Activated CD4-positive, alpha-beta memory T cell treated with anti-CD3 and anti-CD28 coated beads, Interleukin-2, amount 10 ng/mL, durations not matched to agents 7 days and 5 days (primary cell): ENCODE measurements at regions of chr7 and their contacts with region 1.

Region 1: DNA sequence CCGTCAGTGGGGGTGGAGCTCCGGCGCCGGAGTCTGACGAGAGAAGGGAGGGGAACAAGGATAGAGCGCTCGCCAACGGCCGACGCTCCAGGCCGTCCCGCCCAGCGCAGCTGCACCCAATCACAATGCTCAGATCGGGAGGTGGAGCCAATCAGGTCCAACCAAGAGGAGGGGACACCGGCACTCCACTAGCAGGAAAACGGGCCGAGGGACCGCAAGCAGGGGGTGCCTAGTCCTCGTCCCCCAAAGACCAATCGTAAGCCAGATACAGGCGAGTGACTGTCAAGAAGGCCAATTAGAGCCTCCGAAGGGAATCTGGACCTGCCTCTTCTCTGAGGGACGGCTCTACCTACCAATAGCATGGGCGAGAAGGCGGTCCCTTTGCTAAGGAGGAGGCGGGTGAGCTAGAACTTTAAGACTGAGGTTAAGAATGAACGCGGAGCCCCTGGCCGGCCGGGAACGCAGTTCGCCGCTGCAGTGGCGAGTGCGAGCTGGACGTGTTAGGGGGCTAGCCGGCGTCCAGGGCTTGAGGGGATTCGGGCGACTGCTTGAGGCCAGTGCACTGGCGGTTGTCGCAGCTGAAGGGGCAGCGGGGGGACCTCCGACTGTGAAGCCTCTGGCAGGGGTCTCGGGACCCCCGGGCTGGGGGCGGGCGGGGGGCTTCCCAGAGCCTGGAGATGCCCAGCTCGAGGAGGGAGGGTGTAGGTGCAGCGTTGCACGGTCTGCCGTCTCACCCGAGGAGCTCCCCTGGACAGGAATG is at the start of gene FBXO24:
- DNase-seq: peak; percentile 100
- H3K4me3 Mint-ChIP-seq: peak within 1 kb of the TSS; percentile 95
- H3K27ac Mint-ChIP-seq: peak within 1 kb of the TSS; percentile 97
- H3K4me1 Mint-ChIP-seq: peaks cover 30% of the 10 kb centered on the region
- H3K27me3 Mint-ChIP-seq: peaks cover 9% of the 10 kb centered on the region
- total RNA-seq, gene FBXO24: 1.8 to 2.7 TPM

Region 2: GRCh38 chr7:100049441-100050311 is 536.8 kb before region 1 on chr7 and contains the start of gene ZSCAN21:
- CTCF ChIA-PET with region 1: no interaction called
- POLR2A ChIA-PET with region 1: no interaction called
- DNase-seq: peak; percentile 81
- H3K4me3 Mint-ChIP-seq: peak within 1 kb of the TSS; percentile 85
- H3K27ac Mint-ChIP-seq: peak within 1 kb of the TSS; percentile 80
- H3K4me1 Mint-ChIP-seq: peaks cover 17% of the 10 kb centered on the region
- H3K27me3 Mint-ChIP-seq: peaks cover 3% of the 10 kb centered on the region
- total RNA-seq, gene ZSCAN21: 6.9 TPM

Region 3: DNA sequence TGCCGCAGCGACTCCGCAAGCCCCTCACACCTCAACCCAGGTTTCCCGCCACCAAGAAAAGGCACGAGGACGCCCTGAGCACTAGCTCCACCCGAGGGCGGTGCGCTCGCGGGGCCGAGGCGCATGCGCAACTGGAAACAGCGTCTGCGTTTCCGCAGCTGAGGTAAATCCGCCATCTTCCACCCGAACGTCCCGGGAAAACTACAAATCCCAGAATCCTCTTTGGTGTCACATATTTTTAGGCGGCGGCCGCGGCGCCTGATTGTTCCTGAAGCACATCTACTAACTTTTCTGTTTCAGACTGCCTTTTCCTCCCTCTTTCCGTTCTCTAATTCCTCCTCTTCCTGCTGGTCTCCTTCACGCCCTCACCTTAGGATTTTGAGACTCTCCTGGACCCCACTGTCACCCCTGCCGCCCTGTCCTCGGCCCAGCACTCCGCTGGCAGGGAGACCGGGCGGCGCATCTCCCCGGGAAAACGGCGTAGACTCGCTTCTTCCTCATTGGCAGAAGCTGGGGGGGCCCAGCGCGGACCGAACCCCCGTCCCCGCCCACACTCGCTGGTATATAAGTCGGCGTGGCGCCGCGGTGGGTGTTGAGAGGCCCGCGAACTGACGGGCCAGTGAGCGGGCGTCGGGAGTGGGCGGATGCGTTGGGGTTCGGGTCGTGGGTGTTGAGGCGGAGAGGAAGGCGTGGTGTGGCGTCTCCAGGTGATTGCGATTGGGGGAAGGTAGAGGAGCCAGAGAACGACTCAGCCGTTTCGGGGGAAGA is 158.1 kb before region 1 on chr7 and contains the start of gene ZCWPW1:
- CTCF ChIA-PET with region 1: no interaction called
- POLR2A ChIA-PET with region 1: interaction called, 32 read pairs
- DNase-seq: peak; percentile 96
- H3K4me3 Mint-ChIP-seq: peak within 1 kb of the TSS; percentile 92
- H3K27ac Mint-ChIP-seq: peak within 1 kb of the TSS; percentile 100
- H3K4me1 Mint-ChIP-seq: peaks cover 46% of the 10 kb centered on the region
- H3K27me3 Mint-ChIP-seq: peaks cover 3% of the 10 kb centered on the region
- total RNA-seq, gene ZCWPW1: 2.7 to 3.0 TPM

Region 4: DNA sequence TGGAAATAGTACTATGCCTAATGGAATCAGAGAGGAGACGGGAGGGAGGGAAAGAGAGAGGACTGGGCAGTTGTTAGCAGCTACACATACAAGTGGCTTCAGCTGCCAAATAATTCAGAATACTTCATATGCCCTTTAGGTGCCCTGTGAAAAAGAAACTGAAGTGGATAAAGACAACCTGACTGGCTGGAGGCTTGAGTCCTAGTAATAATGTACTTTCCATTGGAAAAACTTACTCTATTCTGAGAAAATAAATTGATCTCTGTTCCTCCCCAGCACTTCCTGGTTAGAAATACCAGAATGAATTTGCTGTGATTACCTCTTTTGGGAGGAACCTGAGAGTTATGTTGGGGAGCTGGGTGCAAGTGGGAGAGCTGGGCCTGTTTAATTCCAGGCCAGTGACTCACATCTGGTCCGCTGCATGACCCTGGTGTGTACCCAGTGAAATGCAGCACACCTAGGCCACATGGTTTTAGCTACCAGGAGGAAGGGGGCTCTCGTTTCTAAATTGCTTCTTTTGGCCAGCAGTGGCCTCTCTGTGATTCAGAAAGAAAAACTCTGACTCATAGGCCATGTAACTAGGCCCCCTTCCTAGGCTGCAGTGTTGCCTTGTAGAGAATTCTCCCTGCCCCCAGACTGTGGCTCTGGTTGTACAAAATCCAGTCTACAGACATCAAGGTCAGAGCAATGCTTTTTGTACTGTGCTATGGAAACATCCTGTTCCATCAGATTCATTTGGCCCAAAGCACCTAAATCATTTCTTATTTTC is 40.9 kb before region 1 on chr7:
- CTCF ChIA-PET with region 1: interaction called, 4 read pairs
- POLR2A ChIA-PET with region 1: interaction called, 22 read pairs
- DNase-seq: peak; percentile 59
- H3K4me3 Mint-ChIP-seq: peak overlapping the region; percentile 97
- H3K27ac Mint-ChIP-seq: peak overlapping the region; percentile 96
- H3K4me1 Mint-ChIP-seq: peaks cover 96% of the 10 kb centered on the region
- H3K27me3 Mint-ChIP-seq: no peaks in the 10 kb centered on the region

Region 5: DNA sequence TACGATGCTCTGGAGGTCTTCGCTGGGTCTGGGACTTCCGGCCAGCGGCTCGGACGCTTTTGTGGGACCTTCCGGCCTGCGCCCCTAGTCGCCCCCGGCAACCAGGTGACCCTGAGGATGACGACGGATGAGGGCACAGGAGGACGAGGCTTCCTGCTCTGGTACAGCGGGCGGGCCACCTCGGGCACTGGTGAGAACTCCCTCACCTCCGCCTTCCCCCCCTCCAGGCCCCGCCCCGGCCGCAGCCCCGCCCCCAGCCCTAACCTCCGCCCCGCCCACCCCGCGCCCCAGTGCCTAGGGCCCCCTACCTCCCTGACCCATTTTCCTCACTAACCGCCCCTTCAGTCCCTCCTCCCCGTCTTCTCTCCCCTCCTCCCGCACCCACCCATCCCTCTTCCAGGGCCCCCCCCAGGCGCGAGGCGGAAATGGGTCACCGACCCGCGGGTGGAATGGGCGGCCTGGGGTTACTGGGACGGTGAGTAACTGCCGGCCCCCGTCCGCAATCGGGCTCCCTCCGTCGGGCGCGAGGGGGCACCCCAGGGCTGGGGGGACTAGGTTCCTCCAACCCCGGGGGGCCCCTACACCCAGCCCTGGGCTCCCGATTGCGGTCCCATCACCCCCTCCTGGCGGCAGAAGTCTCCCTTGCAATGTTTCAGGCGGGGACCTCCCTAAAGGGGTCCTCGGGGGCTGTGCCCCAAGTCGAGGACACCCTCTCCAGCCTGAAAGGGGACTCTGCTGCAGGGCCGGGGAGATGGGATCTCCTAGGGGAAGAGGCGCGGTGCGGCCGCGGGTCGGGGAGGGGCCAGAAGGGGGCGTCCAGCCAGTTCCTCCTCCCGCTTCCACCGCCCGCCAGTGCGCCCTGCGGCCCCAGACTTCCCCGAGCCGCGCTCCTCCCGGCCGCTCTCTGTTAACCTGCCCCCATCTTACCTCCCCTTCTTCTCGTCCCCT is 17.9 kb after region 1 on chr7:
- CTCF ChIA-PET with region 1: interaction called, 17 read pairs
- POLR2A ChIA-PET with region 1: interaction called, 89 read pairs
- DNase-seq: peak; percentile 85
- H3K4me3 Mint-ChIP-seq: peak overlapping the region; percentile 82
- H3K27ac Mint-ChIP-seq: peak overlapping the region; percentile 86
- H3K4me1 Mint-ChIP-seq: peaks cover 37% of the 10 kb centered on the region
- H3K27me3 Mint-ChIP-seq: peaks cover 3% of the 10 kb centered on the region

Region 6: DNA sequence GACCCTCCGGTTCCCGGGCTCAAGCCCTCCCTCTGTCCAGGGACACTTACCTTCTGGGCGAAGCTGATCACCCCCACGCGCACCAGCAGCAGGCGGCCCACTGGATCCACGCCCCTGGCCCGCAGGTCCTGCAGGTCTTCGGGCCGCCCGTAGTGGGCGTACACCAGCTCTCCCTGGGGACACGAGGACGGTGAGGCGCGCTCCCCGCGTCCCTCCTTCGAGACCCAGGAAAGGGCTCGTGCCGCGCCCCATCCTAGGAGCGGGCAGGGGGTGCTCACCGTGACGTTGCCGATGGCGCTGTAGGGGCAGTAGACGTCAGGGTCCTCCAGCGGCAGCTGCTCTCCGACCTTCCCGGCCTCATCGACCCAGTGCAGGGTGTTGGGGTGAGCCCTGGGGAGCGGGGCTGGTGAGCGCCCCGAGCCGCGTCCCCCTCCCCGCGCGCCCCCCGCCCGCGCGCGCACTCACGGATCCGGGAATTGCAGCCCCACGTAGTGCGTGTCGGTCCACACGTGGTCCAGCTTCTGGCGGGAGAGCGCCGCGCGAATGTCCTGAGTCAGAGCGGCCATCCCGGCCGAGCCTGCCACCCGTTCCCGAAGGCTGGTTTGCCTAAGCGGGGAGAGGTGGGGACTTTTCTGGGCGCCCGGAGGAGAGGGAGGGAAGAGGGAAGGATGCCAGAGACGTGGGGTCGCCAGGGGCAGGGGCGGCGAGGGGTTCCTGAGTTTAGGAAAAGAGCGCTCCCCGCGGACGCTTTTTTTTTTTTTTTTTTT is 46.7 kb after region 1 on chr7:
- CTCF ChIA-PET with region 1: interaction called, 36 read pairs
- POLR2A ChIA-PET with region 1: interaction called, 47 read pairs
- DNase-seq: peak; percentile 70
- H3K4me3 Mint-ChIP-seq: peak overlapping the region; percentile 81
- H3K27ac Mint-ChIP-seq: peak overlapping the region; percentile 79
- H3K4me1 Mint-ChIP-seq: peaks cover 48% of the 10 kb centered on the region
- H3K27me3 Mint-ChIP-seq: peaks cover 6% of the 10 kb centered on the region

Region 7: DNA sequence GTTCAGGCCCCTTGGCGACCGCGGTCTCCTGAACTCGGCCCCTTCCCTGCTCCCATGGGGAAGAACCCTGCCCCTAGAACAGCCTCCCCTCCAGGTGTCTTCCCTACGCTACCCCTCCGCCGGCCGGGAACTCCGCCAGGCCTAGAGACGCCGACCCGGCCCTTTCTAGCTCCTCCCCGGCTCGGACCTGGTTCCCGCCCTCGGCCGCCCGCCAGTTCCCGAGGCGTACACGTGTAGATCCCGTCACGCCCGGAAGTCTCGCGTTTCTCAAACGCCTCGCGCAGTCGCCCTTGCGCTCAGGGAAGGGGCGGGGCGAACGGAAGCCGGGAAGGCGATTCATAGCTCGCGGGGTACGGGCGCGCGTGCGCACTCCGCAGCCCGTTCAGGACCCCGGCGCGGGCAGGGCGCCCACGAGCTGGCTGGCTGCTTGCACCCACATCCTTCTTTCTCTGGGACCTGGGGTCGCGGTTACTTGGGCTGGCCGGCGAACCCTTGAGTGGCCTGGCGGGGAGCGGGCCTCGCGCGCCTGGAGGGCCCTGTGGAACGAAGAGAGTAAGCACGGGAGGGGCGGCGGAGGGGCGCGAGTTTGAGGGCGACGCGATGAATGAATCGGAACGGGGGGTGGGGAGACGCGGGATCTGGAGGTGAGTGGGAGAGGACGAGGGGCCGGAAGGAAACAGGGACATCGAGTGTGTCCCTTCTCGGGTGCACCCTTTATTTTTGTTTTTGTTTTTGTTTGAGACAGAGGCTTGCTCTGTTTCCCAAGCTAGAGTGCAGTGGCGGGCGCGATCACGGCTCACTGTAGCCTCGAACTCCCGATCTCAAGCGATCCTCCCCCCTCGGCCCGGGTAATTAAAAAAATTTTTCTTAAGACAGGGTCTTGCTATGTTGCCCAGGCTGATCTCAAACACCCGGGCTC is 119.6 kb after region 1 on chr7 and contains the start of gene POP7:
- CTCF ChIA-PET with region 1: interaction called, 28 read pairs
- POLR2A ChIA-PET with region 1: interaction called, 41 read pairs
- DNase-seq: peak; percentile 99
- H3K4me3 Mint-ChIP-seq: peak within 1 kb of the TSS; percentile 94
- H3K27ac Mint-ChIP-seq: peak within 1 kb of the TSS; percentile 90
- H3K4me1 Mint-ChIP-seq: peaks cover 17% of the 10 kb centered on the region
- H3K27me3 Mint-ChIP-seq: peaks cover 2% of the 10 kb centered on the region
- total RNA-seq, gene POP7: 32.5 to 35.2 TPM